Activated CD4-positive, alpha-beta memory T cell treated with anti-CD3 and anti-CD28 coated beads for 36 hours (primary cell): ENCODE measurements at regions of chr6 and their contacts with region 1.

Region 1: DNA sequence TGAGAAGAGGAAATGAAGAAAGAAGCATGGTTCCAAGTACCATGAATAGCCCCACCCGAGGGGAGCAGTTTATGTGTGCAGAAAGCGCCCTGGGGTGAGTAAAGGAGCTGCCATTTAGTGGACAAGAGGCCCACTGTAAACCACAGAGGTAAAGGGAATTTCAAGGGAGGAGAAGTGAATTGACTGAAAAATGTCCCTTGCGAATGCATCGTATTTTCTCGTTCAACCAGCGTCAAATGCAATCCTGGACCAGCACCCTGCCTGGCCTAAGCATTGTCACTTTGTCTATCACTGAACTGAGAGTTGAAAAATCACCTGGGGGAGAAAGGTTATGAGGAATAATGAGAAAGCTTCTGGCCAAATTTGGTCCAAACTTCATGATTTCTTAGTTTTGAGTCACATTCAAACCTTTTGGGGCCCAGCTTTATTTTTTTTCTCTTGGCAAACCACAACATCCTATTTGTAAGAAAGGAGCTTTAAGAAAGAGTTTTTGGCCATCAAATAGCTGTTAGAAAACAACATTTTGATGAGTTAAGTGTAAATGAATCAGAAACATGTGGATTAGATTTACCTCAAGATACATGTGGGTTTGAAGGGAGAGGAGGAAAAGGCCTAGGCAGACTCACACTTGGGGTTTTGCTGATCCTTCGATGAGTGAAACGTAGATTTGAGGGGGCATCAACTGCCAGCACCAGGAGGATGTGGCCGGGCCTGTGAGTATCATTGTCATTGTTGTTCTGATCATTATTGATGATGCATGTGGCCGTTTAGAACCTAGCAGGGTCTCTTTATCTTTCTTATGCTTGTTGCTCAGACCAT is 214.0 kb downstream of the CLIC5 start:
- DNase-seq: peak; percentile 84
- H3K4me3 Mint-ChIP-seq: no peak overlapping the region
- H3K27ac Mint-ChIP-seq: no peak overlapping the region
- H3K4me1 Mint-ChIP-seq: no peaks in the 10 kb centered on the region
- H3K27me3 Mint-ChIP-seq: peaks cover 8% of the 10 kb centered on the region

Region 2: GRCh38 chr6:45163952-45164766 is 637.5 kb before region 1 on chr6:
- CTCF ChIA-PET with region 1: no interaction called
- POLR2A ChIA-PET with region 1: no interaction called
- intact Hi-C with region 1: loop called (anchors 10 kb)
- DNase-seq: peak; percentile 60
- H3K4me3 Mint-ChIP-seq: peak overlapping the region; percentile 46
- H3K27ac Mint-ChIP-seq: peak overlapping the region; percentile 74
- H3K4me1 Mint-ChIP-seq: peaks cover 42% of the 10 kb centered on the region
- H3K27me3 Mint-ChIP-seq: no peaks in the 10 kb centered on the region

Region 3: GRCh38 chr6:45590225-45590624 is 211.5 kb before region 1 on chr6:
- CTCF ChIA-PET with region 1: no interaction called
- POLR2A ChIA-PET with region 1: no interaction called
- intact Hi-C with region 1: loop called (anchors 5 kb)
- DNase-seq: no peak
- H3K4me3 Mint-ChIP-seq: no peak overlapping the region
- H3K27ac Mint-ChIP-seq: peak overlapping the region; percentile 53
- H3K4me1 Mint-ChIP-seq: peaks cover 94% of the 10 kb centered on the region
- H3K27me3 Mint-ChIP-seq: no peaks in the 10 kb centered on the region

Region 4: GRCh38 chr6:45690846-45691245 is 110.8 kb before region 1 on chr6:
- CTCF ChIA-PET with region 1: no interaction called
- POLR2A ChIA-PET with region 1: no interaction called
- intact Hi-C with region 1: no loop called
- DNase-seq: no peak
- H3K4me3 Mint-ChIP-seq: no peak overlapping the region
- H3K27ac Mint-ChIP-seq: no peak overlapping the region
- H3K4me1 Mint-ChIP-seq: peaks cover 3% of the 10 kb centered on the region
- H3K27me3 Mint-ChIP-seq: no peaks in the 10 kb centered on the region

Region 5: DNA sequence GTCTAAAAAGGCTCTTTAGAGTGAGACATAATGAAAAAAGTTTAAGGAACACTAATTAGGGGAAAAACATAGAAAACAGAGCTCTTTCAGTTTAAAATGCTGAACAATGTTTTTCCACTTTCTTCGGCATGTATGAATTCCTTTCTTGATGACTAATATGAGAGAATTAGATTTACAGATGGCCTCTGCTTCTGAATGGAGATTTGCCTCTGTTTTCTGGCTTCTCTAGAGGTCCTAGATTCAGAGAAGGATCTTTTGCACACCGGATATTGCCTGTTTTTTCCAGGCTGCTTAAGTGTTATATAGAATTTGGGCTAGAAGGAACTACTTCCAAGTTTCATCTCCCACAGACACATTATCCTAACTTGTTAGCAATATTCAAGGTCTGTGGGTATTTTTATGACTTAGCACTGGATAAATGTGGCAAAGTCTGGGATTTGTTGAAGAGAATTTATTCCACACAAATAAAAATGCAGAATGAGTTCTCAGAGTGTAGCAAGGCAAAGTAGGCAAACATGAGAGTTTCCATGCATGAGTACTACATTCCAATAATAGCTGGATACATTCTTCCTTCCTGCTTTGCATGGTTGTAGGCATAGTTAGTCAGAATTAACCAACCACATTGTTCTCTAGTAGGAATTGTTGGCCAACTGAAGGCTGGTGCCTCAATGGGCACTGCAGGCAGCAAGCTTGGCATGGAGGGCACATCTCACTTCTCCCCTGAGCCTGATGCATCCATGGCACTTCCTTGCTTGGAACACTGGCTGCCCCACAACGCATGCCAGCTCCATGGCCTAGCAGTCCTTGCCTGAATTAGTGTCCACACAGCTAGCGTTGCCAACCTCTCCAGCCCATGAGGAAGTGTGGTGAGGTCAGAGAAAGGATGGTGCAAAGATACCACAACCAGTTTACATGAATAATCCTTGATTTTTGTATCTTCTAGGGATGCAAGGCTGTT is 10.2 kb before region 1 on chr6:
- CTCF ChIA-PET with region 1: no interaction called
- POLR2A ChIA-PET with region 1: interaction called, 6 read pairs
- intact Hi-C with region 1: loop called (anchors 1 kb)
- DNase-seq: no peak
- H3K4me3 Mint-ChIP-seq: no peak overlapping the region
- H3K27ac Mint-ChIP-seq: peak overlapping the region; percentile 76
- H3K4me1 Mint-ChIP-seq: peaks cover 26% of the 10 kb centered on the region
- H3K27me3 Mint-ChIP-seq: peaks cover 2% of the 10 kb centered on the region

Region 6: DNA sequence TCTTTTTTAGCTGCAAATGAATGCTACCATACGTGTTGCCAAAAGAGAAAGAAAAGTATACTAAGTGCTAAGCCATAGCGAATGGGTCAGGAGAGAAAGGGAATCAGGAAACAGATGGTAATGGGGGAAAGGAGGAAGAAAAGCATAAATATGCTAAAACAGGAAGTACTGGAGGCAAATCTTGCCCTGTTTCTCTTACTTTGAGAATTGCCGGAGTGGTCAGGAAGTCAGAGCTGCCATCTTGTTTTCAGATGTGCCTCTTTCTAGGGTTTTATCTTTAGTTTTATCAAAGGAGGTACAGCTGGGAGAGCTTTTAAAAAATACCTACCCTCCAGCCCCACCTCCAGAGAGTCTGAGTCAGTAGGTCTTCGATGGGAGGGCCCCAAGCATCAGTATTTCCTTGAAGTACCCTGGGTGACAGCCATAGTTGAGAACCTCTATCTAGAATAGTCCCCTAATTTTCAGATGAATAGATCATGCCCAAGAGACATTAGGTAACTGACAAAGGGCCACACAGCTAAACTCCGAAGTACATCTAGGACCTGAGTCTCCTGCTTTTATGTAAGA is 20.6 kb after region 1 on chr6:
- CTCF ChIA-PET with region 1: no interaction called
- POLR2A ChIA-PET with region 1: interaction called, 25 read pairs
- intact Hi-C with region 1: loop called (anchors 1 kb)
- DNase-seq: peak; percentile 67
- H3K4me3 Mint-ChIP-seq: peak overlapping the region; percentile 47
- H3K27ac Mint-ChIP-seq: peak overlapping the region; percentile 89
- H3K4me1 Mint-ChIP-seq: peaks cover 50% of the 10 kb centered on the region
- H3K27me3 Mint-ChIP-seq: peaks cover 3% of the 10 kb centered on the region

Region 7: DNA sequence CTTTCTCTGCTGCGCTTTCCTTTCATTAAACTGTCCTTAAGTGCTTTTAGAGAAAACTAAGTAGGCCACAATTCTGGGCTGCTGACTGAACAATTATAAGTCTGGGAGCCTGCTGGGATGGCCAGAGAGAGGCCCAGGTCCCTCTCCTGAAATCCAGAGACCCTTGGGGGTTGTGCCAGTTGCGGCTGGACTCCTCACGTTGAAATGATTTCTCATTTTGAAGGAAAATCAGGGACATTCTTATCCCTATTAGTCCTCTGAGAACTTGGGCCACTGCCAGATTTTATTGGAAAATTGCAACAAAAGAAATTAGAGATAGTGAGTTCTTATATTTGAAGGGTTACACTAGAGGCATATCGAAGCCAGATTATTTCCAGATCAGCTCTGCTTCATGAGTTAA is 68.9 kb after region 1 on chr6:
- CTCF ChIA-PET with region 1: no interaction called
- POLR2A ChIA-PET with region 1: no interaction called
- intact Hi-C with region 1: no loop called
- DNase-seq: no peak
- H3K4me3 Mint-ChIP-seq: no peak overlapping the region
- H3K27ac Mint-ChIP-seq: no peak overlapping the region
- H3K4me1 Mint-ChIP-seq: no peaks in the 10 kb centered on the region
- H3K27me3 Mint-ChIP-seq: peaks cover 14% of the 10 kb centered on the region